ENCODE measurements at regions of chr19 and their contacts with region 1.

Region 1: DNA sequence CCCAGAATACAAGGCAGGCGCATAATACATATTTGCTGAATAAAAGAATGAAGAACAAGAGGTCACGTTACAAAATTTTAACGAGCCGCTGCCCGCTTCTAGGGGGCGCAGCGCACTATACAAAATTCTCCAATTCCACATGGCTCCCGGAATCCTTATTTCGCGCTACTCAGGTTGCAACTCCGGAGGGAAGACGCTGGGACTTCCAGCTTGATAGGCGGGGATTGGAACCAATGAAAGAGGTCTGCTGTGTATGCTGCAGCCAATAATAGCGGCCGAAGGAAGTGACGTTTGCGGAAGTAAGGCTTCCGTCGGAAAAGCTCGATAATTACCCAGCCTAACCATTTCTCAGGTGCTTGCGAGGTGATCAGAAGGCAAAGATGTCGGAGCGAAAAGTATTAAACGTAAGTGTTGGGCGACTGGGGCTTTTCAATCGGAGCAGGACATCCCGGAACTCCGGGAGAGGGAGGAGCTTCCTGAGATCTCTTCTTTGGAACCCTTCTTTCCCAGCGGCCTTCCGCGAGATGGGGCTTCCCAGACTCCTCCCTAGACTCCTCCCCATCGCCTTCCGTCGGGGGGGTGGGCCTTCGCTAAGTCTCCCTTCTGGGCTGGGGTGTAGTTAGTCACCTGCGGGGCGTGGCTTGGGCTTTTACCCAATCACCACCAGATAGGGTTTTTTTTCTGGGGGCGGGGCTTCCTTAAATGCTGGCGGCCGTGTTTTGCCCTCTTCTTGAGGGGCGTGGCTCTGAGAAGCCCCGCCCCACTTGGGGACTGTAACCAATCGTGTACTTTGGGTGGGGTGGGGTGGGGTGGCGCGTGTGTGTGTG is at the start of gene YJU2:
- DNase-seq: peak; percentile 96 to 100 (median 98)
- ATAC-seq: peak; percentile 94
- H3K4me3 ChIP-seq: peak within 1 kb of the TSS; percentile 73
- H3K4me3 Mint-ChIP-seq: peak within 1 kb of the TSS; percentile 93
- H3K27ac ChIP-seq: peak within 1 kb of the TSS; percentile 94 to 99
- H3K27ac Mint-ChIP-seq: peak within 1 kb of the TSS; percentile 95
- H3K4me1 ChIP-seq: peaks cover 22% of the 10 kb centered on the region
- H3K4me1 Mint-ChIP-seq: peaks cover 17% of the 10 kb centered on the region
- H3K27me3 ChIP-seq: no peaks in the 10 kb centered on the region
- H3K27me3 Mint-ChIP-seq: peaks cover 1% of the 10 kb centered on the region
- CTCF ChIP-seq: peak; percentile 58
- total RNA-seq, gene YJU2: 32.9 to 33.7 TPM

Region 2: DNA sequence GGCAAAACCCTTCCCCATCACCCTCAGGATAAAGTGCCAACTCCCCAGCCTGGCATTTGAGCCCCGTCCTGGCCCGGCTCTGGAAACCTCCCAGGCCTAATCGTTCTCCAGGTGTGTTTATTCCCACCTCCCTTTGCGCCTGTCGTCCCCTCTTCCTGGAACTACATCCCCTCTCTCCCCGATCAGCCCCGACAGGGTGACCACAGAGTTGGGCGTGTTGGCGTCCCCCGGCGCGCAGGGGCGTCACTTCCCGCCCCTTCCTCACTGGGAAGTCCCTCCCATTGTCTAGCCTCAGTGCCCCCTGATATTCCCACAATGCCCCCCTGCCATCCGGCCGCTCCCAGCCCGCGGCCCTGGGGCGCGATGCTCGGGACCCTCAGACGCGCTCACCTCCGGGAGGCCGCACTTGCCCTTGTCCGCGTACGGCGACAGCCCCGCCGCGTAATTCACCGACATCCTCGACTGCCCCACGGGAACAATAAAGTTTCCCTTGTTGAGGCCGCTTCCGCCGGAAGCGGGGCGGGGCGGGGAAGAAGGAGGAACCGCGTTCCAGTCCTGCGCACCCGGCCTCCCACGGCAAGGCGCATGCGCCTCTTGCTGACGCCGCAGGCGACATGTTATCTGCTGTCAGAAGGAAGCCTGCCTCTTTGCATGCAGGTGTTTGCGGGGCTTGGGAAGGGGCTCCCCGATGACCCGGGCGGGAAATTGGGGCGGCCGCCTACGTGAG is 64.7 kb before region 1 on chr19 and contains the starts of genes ANKRD24 and SIRT6:
- CTCF ChIA-PET with region 1: no interaction called
- POLR2A ChIA-PET with region 1: no interaction called
- intact Hi-C with region 1: loop called in 1 of 2 experiments (anchors 5 kb)
- DNase-seq: peak; percentile 90 to 98 (median 96)
- ATAC-seq: peak; percentile 80
- H3K4me3 ChIP-seq: peak within 1 kb of the TSS; percentile 96
- H3K4me3 Mint-ChIP-seq: peak within 1 kb of the TSS; percentile 99
- H3K27ac ChIP-seq: peak within 1 kb of the TSS; percentile 66 to 80
- H3K27ac Mint-ChIP-seq: peak within 1 kb of the TSS; percentile 96
- H3K4me1 ChIP-seq: peaks cover 47% of the 10 kb centered on the region
- H3K4me1 Mint-ChIP-seq: peaks cover 32% of the 10 kb centered on the region
- H3K27me3 ChIP-seq: no peaks in the 10 kb centered on the region
- H3K27me3 Mint-ChIP-seq: peaks cover 3% of the 10 kb centered on the region
- CTCF ChIP-seq: no peak
- total RNA-seq, gene ANKRD24: 0.59 to 0.60 TPM
- total RNA-seq, gene SIRT6: 11.2 to 14.2 TPM

Region 3: DNA sequence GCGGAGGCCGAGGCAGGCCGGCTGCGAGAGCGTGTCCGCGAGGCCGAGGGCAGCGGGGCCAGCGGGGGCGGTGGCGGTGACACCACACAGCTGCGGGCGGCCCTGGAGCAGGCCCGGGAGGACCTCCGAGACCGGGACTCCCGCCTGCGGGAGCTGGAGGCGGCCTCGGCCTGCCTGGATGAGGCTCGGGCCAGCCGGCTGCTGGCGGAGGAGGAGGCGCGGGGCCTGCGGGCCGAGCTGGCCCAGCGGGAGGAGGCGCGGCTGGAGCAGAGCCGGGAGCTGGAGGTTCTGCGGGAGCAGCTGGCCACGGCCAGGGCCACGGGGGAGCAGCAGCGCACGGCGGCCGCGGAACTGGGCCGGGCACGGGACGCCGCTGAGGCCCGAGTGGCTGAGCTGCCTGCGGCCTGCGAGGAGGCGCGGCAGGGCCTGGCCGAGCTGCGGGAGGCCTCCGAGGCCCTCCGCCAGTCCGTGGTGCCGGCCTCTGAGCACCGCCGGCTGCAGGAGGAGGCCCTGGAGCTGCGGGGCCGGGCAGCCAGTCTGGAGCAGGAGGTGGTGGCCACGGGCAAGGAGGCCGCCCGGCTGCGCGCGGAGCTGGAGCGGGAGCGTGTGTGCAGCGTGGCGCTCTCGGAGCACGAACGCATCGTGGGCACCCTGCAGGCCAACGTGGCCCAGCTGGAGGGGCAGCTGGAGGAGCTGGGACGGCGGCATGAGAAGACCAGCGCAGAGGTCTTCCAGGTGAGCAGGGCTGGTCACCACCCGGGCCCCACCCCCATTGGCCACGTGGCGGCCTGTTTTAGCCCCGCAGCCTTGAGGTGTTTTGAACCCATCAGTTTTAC is 29.3 kb before region 1 on chr19:
- CTCF ChIA-PET with region 1: no interaction called
- POLR2A ChIA-PET with region 1: no interaction called
- intact Hi-C with region 1: no loop called
- DNase-seq: peak in 1 of 14 experiments; percentile 25
- ATAC-seq: no peak
- H3K4me3 ChIP-seq: no peak overlapping the region
- H3K4me3 Mint-ChIP-seq: no peak overlapping the region
- H3K27ac ChIP-seq: no peak overlapping the region
- H3K27ac Mint-ChIP-seq: no peak overlapping the region
- H3K4me1 ChIP-seq: peaks cover 10% of the 10 kb centered on the region
- H3K4me1 Mint-ChIP-seq: peaks cover 10% of the 10 kb centered on the region
- H3K27me3 ChIP-seq: no peaks in the 10 kb centered on the region
- H3K27me3 Mint-ChIP-seq: no peaks in the 10 kb centered on the region
- CTCF ChIP-seq: no peak

Region 4: GRCh38 chr19:4342615-4343369 is 95.8 kb after region 1 on chr19:
- CTCF ChIA-PET with region 1: interaction called, 5 read pairs
- POLR2A ChIA-PET with region 1: interaction called, 37 read pairs
- intact Hi-C with region 1: loop called (anchors 1 kb)
- DNase-seq: peak; percentile 79 to 99 (median 86)
- ATAC-seq: peak; percentile 81
- H3K4me3 ChIP-seq: peak overlapping the region; percentile 93
- H3K4me3 Mint-ChIP-seq: peak overlapping the region; percentile 91
- H3K27ac ChIP-seq: peak overlapping the region; percentile 70 to 92
- H3K27ac Mint-ChIP-seq: peak overlapping the region; percentile 83
- H3K4me1 ChIP-seq: peaks cover 40% of the 10 kb centered on the region
- H3K4me1 Mint-ChIP-seq: peaks cover 37% of the 10 kb centered on the region
- H3K27me3 ChIP-seq: no peaks in the 10 kb centered on the region
- H3K27me3 Mint-ChIP-seq: no peaks in the 10 kb centered on the region
- CTCF ChIP-seq: peak; percentile 34

Region 5: GRCh38 chr19:4471403-4472173 is 224.6 kb after region 1 on chr19:
- CTCF ChIA-PET with region 1: interaction called, 4 read pairs
- POLR2A ChIA-PET with region 1: interaction called, 20 read pairs
- intact Hi-C with region 1: loop called (anchors 1 to 5 kb)
- DNase-seq: peak; percentile 92 to 100 (median 96)
- ATAC-seq: peak; percentile 84
- H3K4me3 ChIP-seq: peak overlapping the region; percentile 64
- H3K4me3 Mint-ChIP-seq: no peak overlapping the region
- H3K27ac ChIP-seq: peak overlapping the region; percentile 71 to 72
- H3K27ac Mint-ChIP-seq: no peak overlapping the region
- H3K4me1 ChIP-seq: peaks cover 35% of the 10 kb centered on the region
- H3K4me1 Mint-ChIP-seq: peaks cover 22% of the 10 kb centered on the region
- H3K27me3 ChIP-seq: no peaks in the 10 kb centered on the region
- H3K27me3 Mint-ChIP-seq: no peaks in the 10 kb centered on the region
- CTCF ChIP-seq: no peak

Region 6: DNA sequence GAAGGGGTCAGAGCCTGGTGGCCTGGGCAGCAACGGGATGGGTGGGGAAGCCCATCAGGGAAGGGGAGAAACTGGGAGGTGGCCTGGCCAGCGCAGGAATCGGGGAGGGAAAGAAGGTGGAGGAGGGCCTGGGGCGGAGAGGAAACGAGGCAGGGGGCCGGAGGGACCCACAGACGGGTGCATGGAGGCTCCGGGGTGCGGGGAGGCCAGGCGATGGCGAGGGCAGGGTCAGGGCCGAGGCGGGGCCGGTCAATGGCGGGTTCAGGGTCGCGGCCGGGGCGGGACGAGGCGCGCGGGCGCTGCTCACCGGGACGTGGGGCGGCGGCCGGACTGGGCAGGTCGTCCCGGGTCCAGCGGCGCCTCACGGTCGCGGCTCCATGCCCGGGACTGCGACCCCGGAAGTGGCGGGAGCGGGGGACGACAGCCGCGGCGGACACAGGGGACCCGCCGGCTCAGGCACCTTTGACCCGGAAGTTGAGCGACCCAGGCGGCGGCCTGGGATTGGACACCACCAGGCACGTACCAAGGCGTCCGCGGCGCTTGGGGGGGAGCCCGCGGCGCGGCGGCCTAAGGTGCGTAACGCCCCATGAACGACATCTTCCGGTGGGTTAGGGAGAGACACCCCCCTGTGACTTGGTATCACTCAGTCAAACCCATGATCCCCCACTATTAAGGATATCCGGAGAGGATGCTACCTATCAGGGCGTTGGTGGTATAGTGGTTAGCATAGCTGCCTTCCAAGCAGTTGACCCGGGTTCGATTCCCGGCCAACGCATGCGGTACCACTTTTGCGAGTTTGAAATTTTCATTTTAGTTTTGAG is 476.6 kb after region 1 on chr19 and contains the start of gene DPP9:
- CTCF ChIA-PET with region 1: no interaction called
- POLR2A ChIA-PET with region 1: interaction called, 5 read pairs
- intact Hi-C with region 1: loop called in 1 of 2 experiments (anchors 2 kb)
- DNase-seq: peak; percentile 93 to 100 (median 96)
- ATAC-seq: peak; percentile 93
- H3K4me3 ChIP-seq: peak within 1 kb of the TSS; percentile 97
- H3K4me3 Mint-ChIP-seq: peak within 1 kb of the TSS; percentile 95
- H3K27ac ChIP-seq: peak within 1 kb of the TSS; percentile 64 to 85
- H3K27ac Mint-ChIP-seq: peak within 1 kb of the TSS; percentile 97
- H3K4me1 ChIP-seq: peaks cover 30% of the 10 kb centered on the region
- H3K4me1 Mint-ChIP-seq: peaks cover 25% of the 10 kb centered on the region
- H3K27me3 ChIP-seq: no peaks in the 10 kb centered on the region
- H3K27me3 Mint-ChIP-seq: peaks cover 13% of the 10 kb centered on the region
- CTCF ChIP-seq: no peak
- total RNA-seq, gene DPP9: 67.9 to 72.8 TPM